ENCODE measurements at regions of chr4 and their contacts with region 1.

Region 1: GRCh38 chr4:82688091-82688795 is 110.4 kb downstream of the SCD5 start:
- DNase-seq: no peak
- ATAC-seq: no peak
- H3K4me3 ChIP-seq: no peak overlapping the region
- H3K27ac ChIP-seq: peak overlapping the region in 1 of 12 donors; percentile 13
- H3K4me1 ChIP-seq: peaks cover 0 to 9% (median 0%) of the 10 kb centered on the region in 12 donors
- H3K27me3 ChIP-seq: no peaks in the 10 kb centered on the region
- CTCF ChIP-seq: no peak
- POLR2A ChIP-seq: no peak

Region 2: DNA sequence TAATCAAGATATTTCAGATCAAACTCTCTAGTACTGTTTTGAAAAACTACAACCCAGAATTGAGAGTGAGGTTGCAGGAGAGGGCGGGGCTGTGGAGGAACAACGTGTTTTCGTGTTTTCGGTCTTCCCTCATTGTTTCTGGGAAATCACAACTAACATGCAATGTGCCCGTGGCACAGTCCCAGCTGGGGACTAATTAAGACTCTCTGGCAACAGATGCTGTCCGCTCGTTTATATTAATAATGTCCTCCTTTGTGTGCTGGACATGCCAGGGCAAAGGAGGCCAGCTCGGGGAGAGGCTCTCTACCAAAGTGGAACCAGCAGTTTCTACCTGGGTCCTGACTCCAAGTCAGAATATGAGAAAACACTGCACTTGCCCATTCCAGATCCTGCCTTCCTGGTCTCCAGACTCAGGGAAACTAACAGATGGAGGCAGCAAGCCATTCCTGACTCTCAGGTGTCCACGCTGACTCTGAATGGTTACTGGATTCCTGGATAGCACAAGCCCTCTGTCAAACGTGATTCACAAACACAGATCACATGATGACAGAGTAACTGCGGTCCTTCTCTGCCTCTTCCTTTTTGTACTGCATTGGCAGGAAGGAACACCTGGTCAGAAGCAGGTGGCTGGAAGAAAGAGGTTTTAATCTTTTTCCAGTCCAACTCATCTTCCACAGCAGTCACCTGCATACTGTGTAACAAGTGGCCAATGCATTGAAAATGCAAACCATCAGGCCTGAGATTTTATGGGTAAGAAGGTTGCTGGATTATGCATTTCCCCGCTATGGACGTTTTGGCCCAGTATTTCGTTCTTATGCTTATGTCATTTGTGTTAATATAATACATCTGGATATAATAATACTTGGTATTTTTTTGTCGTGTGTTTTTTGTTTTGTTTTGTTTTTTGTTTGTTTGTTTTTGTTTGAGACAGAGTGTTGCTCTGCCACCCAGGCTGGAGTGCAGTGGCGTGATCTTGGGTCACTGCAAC is 531.4 kb after region 1 on chr4:
- intact Hi-C with region 1: loop called in 1 of 10 experiments (anchors 10 kb)
- DNase-seq: no peak
- ATAC-seq: no peak
- H3K4me3 ChIP-seq: no peak overlapping the region
- H3K27ac ChIP-seq: peak overlapping the region in 1 of 12 donors; percentile 86
- H3K4me1 ChIP-seq: peaks cover 0 to 50% (median 0%) of the 10 kb centered on the region in 12 donors
- H3K27me3 ChIP-seq: no peaks in the 10 kb centered on the region
- CTCF ChIP-seq: no peak
- POLR2A ChIP-seq: no peak

Measured in heart left ventricle (tissue), 16 donors.